Heart right ventricle (tissue), 16 donors: ENCODE measurements at regions of chr9 and their contacts with region 1.

Region 1: GRCh38 chr9:128593039-128593438 is 40.7 kb downstream of the SPTAN1 start:
- DNase-seq: no peak
- ATAC-seq: peak in 1 of 8 donors; percentile 17
- H3K4me3 ChIP-seq: no peak overlapping the region
- H3K27ac ChIP-seq: no peak overlapping the region
- H3K4me1 ChIP-seq: no peaks in the 10 kb centered on the region
- H3K27me3 ChIP-seq: no peaks in the 10 kb centered on the region
- CTCF ChIP-seq: no peak

Region 2: DNA sequence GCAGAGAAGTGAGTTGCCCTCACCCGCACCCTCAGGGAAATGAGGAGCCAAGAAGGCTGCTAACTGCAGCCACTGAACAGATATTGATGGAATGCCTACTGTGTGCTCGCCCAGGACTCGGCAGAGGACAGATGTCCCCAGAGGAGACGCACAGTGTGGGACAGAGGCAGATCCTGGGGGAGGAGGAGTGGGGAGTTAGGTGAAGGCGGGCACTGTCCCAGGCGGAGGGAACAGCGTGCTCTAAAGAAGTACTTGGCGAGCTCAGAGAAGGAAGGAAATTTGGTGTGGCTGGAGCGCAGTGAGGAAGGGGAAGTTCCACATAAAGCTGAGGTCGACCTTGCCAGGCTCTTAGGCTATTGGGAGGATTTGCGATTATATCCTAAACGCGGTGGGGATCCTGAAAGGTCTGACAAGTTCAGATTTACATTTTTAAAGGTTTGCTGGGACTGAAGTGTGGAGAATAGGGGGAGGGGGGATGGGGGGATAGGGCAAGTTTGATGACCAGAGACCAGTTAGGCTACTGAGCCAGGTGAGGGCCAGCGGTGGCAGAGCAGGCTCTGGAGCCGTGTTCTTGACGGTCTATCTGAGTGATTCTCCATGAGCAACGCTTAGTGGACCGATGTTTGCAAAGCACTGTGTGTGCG is 195.9 kb before region 1 on chr9:
- intact Hi-C with region 1: no loop called
- DNase-seq: peak in 1 of 2 donors; percentile 35
- ATAC-seq: peak; percentile 36 to 95 (median 76)
- H3K4me3 ChIP-seq: peak overlapping the region in 6 of 10 donors; percentile 3 to 29 (median 15)
- H3K27ac ChIP-seq: peak overlapping the region in 9 of 10 donors; percentile 24 to 76 (median 49)
- H3K4me1 ChIP-seq: peaks cover 0 to 17% (median 12%) of the 10 kb centered on the region in 9 donors
- H3K27me3 ChIP-seq: peaks cover 0 to 52% (median 6%) of the 10 kb centered on the region in 7 donors
- CTCF ChIP-seq: no peak

Region 3: GRCh38 chr9:128987805-128988204 is 394.8 kb after region 1 on chr9:
- intact Hi-C with region 1: loop called in 1 of 10 experiments (anchors 10 kb)
- DNase-seq: peak in 1 of 2 donors; percentile 38
- ATAC-seq: peak; percentile 25 to 89 (median 68)
- H3K4me3 ChIP-seq: no peak overlapping the region
- H3K27ac ChIP-seq: peak overlapping the region in 5 of 10 donors; percentile 33 to 74 (median 54)
- H3K4me1 ChIP-seq: peaks cover 0 to 7% (median 0%) of the 10 kb centered on the region in 9 donors
- H3K27me3 ChIP-seq: no peaks in the 10 kb centered on the region
- CTCF ChIP-seq: no peak